ENCODE measurements at regions of chr6 and their contacts with region 1.

Region 1: GRCh38 chr6:133923938-133924593 is 29.0 kb upstream of the TBPL1 start:
- DNase-seq: peak in 1 of 2 experiments; percentile 60
- H3K4me3 ChIP-seq: peak overlapping the region in 1 of 4 experiments; percentile 27; a peak in 1 of 8 replicates
- H3K27ac ChIP-seq: no peak overlapping the region
- H3K4me1 ChIP-seq: peaks cover 0 to 3% (median 0%) of the 10 kb centered on the region in 4 experiments; a peak in 1 of 7 replicates
- H3K27me3 ChIP-seq: no peaks in the 10 kb centered on the region
- CTCF ChIP-seq: peak in 2 of 3 experiments; percentile 77 to 83; a peak in 3 of 4 replicates
- EP300 ChIP-seq: no peak
- POLR2A ChIP-seq: no peak
- RAD21 ChIP-seq: peak; percentile 96

Region 2: GRCh38 chr6:133761706-133762105 is 162.4 kb before region 1 on chr6:
- CTCF ChIA-PET with region 1: no interaction called
- POLR2A ChIA-PET with region 1: no interaction called
- DNase-seq: no peak
- H3K4me3 ChIP-seq: no peak overlapping the region
- H3K27ac ChIP-seq: no peak overlapping the region
- H3K4me1 ChIP-seq: peaks cover 0 to 3% (median 0%) of the 10 kb centered on the region in 4 experiments; a peak in 1 of 7 replicates
- H3K27me3 ChIP-seq: no peaks in the 10 kb centered on the region
- CTCF ChIP-seq: no peak
- EP300 ChIP-seq: no peak
- POLR2A ChIP-seq: no peak
- RAD21 ChIP-seq: no peak

Region 3: DNA sequence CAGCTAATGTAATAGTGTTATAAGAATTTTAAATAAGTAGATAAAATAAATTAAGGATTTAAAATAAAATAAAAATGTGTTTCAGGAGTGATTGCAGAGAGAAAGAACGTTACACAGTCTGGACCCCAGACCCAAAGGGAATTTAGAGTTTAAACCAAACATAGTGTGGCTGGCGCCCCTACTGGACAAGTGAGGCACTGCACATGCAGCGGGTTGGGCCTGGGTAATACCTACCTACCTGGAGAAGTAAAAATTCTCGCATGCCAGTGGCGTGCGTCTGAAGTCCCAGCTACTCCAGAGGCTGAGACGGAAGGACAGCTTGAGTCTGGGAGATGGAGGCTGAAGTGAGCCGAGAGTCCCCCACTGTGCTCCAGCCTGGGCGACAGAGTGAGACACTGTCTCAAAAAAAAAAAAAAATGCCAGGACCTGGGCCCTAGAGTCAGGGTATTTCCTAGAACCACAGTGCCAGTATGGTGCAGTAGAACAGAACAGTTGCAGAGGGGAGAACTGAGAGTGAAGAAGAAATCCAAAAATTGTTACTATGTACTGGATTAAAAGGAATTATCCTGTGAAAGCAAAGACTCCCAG is 106.5 kb before region 1 on chr6:
- CTCF ChIA-PET with region 1: interaction called, 21 read pairs
- POLR2A ChIA-PET with region 1: no interaction called
- DNase-seq: peak; percentile 61 to 96
- H3K4me3 ChIP-seq: no peak overlapping the region
- H3K27ac ChIP-seq: no peak overlapping the region
- H3K4me1 ChIP-seq: peaks cover 0 to 2% (median 0%) of the 10 kb centered on the region in 4 experiments; a peak in 1 of 7 replicates
- H3K27me3 ChIP-seq: no peaks in the 10 kb centered on the region
- CTCF ChIP-seq: peak; percentile 73 to 96 (median 91)
- EP300 ChIP-seq: no peak
- POLR2A ChIP-seq: no peak
- RAD21 ChIP-seq: peak; percentile 72 to 74

Region 4: DNA sequence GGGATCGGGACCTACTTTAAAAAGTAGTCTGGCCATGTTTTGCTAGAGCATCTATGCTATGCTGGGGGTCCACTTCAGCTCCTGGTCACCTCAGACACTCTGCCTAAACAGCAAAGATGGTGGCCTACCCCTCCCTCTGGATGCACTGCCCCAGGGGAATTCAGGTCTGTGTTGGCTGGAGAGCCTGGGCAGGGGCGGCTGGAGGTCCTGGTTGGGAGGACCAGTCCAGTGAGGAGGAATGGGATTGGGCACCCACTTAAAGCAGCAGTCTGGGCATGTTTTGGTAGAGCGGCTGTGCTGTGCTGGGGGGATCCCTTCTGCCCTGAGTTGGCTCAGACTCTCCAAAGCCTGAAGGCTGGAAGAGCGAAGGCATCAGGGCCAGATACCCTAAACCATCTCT is 58.4 kb before region 1 on chr6:
- CTCF ChIA-PET with region 1: no interaction called
- POLR2A ChIA-PET with region 1: no interaction called
- DNase-seq: no peak
- H3K4me3 ChIP-seq: no peak overlapping the region
- H3K27ac ChIP-seq: no peak overlapping the region
- H3K4me1 ChIP-seq: no peaks in the 10 kb centered on the region
- H3K27me3 ChIP-seq: no peaks in the 10 kb centered on the region
- CTCF ChIP-seq: no peak
- EP300 ChIP-seq: no peak
- POLR2A ChIP-seq: no peak
- RAD21 ChIP-seq: no peak

Region 5: DNA sequence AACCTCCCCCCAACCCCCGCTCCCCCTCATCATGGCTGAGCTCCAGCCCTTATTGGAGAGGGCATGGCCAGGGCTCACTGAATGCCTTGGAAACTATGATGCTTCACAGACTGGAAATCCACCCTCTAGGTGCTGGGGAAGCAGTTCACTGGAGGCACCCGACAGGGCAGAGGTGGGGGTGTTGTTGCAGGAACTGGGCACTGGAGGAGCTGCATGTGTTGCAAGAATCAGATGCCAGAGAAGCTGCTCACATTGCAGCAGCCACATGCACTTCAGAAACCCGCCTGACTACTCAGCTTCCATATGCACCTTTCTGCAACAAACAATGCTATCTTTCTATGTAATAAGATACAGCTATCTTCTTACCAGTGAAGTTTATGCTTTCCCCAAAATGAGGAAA is 21.1 kb after region 1 on chr6:
- CTCF ChIA-PET with region 1: interaction called, 19 read pairs
- POLR2A ChIA-PET with region 1: no interaction called
- DNase-seq: no peak
- H3K4me3 ChIP-seq: no peak overlapping the region
- H3K27ac ChIP-seq: no peak overlapping the region
- H3K4me1 ChIP-seq: no peaks in the 10 kb centered on the region; a peak in 1 of 7 replicates
- H3K27me3 ChIP-seq: no peaks in the 10 kb centered on the region
- CTCF ChIP-seq: peak in 2 of 3 experiments; percentile 15 to 23; a peak in 2 of 4 replicates
- EP300 ChIP-seq: no peak
- POLR2A ChIP-seq: no peak
- RAD21 ChIP-seq: no peak

Region 6: DNA sequence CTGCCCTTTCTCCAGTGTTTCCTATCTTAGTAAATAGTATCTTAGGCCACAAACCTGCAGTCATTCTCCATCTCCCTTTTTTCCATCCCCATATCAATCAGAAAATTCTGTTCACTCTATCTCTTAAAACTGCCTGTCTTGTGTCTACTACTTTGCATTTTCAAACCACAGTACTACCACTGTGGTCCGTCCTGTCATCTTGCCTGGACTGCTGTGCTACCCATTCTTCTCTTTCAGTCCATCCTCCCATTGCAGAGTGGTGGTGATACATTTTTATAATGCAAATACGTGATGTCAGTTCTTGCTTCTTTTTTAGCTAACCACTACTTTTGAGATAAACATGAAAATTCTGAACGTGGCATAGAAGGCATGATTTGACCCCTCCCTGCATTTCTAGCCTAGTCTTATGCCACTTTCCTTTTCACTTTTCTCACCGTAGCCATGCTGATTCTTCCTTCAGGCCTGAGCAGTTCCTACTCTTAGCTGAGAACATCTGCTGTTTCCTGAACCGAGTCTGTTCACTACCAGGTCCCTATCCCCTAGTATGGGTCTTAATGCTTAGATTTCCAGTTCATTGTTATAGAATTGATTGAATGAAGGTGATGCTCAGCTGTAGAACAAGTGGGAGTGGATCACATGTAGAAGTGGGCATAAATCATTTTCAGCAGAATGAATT is 42.7 kb after region 1 on chr6:
- CTCF ChIA-PET with region 1: interaction called, 27 read pairs
- POLR2A ChIA-PET with region 1: no interaction called
- DNase-seq: no peak
- H3K4me3 ChIP-seq: no peak overlapping the region
- H3K27ac ChIP-seq: no peak overlapping the region
- H3K4me1 ChIP-seq: peaks cover 0 to 3% (median 1%) of the 10 kb centered on the region in 4 experiments; a peak in 2 of 7 replicates
- H3K27me3 ChIP-seq: no peaks in the 10 kb centered on the region
- CTCF ChIP-seq: no peak
- EP300 ChIP-seq: no peak
- POLR2A ChIP-seq: no peak
- RAD21 ChIP-seq: no peak

Region 7: DNA sequence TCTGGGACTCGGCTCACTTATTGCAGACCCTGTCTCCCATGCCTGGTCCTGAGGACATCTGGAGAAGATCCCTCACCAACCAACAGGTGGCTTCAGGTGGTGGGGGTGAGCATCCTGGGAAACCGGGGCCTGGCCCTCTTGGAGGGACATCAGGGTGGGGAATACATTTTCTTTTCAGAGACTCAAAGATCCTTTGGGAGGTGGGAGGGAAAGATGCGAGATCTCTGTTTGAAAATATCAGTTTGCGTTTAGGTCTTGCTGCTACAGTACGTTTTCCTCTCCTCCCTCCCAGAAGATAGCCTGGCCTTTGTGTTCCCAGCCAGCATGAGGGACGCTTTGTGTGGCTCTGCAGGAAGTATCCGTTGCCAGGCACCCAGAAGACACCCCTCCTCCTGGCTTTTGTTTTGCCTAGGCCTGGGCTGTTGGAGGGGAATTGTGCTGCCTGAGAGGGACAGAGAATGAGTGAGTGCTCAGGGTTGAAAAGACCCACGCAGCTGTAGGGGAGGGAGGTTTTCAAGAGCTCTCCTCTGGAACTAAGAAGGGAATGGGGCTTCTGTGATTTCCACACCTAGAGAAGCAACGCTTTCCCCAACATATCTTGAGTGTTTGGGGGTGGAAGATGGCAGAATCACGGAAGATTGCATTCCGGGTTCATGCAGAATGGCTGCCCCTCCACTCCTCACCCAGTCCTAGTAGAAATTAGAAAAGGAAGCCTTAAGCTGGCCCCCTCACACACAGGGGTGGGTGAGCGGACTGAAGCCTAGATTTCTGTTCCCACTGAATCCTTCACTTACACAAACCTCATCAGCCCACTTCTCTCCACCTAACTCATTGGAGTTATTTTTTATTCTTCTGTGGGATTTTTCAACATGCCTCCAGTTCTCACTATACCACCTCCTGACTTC is 150.3 kb after region 1 on chr6:
- CTCF ChIA-PET with region 1: interaction called, 18 read pairs
- POLR2A ChIA-PET with region 1: no interaction called
- DNase-seq: peak; percentile 72 to 78
- H3K4me3 ChIP-seq: peak overlapping the region in 3 of 4 experiments; percentile 14 to 42 (median 34); a peak in 5 of 8 replicates
- H3K27ac ChIP-seq: peak overlapping the region; percentile 69
- H3K4me1 ChIP-seq: peaks cover 4 to 13% (median 10%) of the 10 kb centered on the region in 4 experiments; a peak in 6 of 7 replicates
- H3K27me3 ChIP-seq: no peaks in the 10 kb centered on the region
- CTCF ChIP-seq: peak in 1 of 3 experiments; percentile 8; a peak in 1 of 4 replicates
- EP300 ChIP-seq: peak in 1 of 2 experiments; percentile 18; a peak in 1 of 3 replicates
- POLR2A ChIP-seq: peak in 1 of 2 experiments; percentile 89; a peak in 2 of 3 replicates
- RAD21 ChIP-seq: no peak

Region 8: DNA sequence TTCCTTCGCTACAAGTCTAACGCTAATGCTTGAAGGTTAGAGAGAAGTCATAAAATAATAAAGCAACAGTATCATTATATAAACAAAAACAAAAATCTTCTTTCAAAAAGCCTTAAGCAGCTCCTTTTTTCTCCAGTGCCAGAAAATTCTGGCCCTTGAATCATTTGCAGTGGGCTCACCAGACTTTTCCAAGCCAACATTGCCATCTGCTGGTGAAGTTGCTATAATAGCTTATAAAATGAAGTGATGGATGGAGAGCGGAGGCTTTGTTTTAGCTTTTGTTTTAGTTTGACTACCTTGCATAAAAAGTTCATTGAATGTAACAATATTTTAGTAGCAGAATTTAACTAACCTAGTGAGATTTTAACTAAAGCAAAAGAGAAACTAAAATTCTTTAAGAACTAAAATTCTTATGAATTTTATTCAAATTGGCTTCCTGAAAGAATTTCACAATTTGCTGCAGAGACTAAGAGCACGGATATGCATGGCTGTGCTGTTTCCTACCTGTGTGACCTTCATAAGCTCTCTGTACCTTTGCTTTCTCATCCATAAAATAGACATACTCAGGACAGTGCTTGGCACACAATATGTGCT is 173.1 kb after region 1 on chr6:
- CTCF ChIA-PET with region 1: interaction called, 374 read pairs
- POLR2A ChIA-PET with region 1: interaction called, 11 read pairs
- DNase-seq: peak in 1 of 2 experiments; percentile 71
- H3K4me3 ChIP-seq: no peak overlapping the region
- H3K27ac ChIP-seq: no peak overlapping the region
- H3K4me1 ChIP-seq: no peaks in the 10 kb centered on the region
- H3K27me3 ChIP-seq: peaks cover 0 to under 1% (median 0%) of the 10 kb centered on the region in 4 experiments; a peak in 1 of 7 replicates
- CTCF ChIP-seq: peak in 2 of 3 experiments; percentile 63 to 69; a peak in 3 of 4 replicates
- EP300 ChIP-seq: no peak
- POLR2A ChIP-seq: no peak
- RAD21 ChIP-seq: peak; percentile 96 to 98

Measured in H1 (cell line).